ENCODE measurements at regions of chr3 and their contacts with region 1.

Region 1: GRCh38 chr3:58177747-58178527 is 32.8 kb downstream of the DNASE1L3 start:
- DNase-seq: peak; percentile 83 to 97 (median 92)

Region 2: GRCh38 chr3:58008140-58009025 is 169.6 kb before region 1 on chr3 and contains the start of gene FLNB:
- intact Hi-C with region 1: loop called (anchors 5 kb)
- DNase-seq: peak; percentile 15 to 88 (median 74)

Region 3: GRCh38 chr3:58129041-58129770 is 48.7 kb before region 1 on chr3:
- intact Hi-C with region 1: no loop called
- DNase-seq: no peak

Region 4: GRCh38 chr3:58167431-58168351 is 10.2 kb before region 1 on chr3:
- intact Hi-C with region 1: no loop called
- DNase-seq: peak; percentile 20 to 89 (median 74)